ENCODE measurements at regions of chr10 and their contacts with region 1.

Region 1: GRCh38 chr10:69329721-69330178 is 51.5 kb downstream of the HK1 start:
- DNase-seq: no peak

Region 2: DNA sequence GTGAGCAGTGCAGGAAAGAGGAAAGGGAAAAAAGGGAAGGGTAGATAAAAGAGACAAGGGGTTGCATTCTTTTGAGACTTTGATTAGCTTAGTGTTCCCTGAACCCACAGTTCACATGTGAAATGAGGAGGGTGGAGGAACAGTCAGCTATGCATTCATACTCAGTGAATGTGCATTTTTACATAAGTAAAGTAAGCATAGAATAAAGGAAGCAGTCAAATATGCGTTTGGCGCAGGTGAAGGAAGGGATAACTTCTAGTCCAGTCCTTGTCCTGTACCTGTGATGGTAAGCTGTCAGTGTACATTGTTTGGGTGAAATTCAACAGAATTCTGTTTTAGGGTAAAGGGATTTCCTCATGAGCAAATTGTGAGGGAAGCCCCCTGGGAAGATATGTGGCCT is 23.3 kb before region 1 on chr10:
- intact Hi-C with region 1: loop called in 1 of 2 experiments (anchors 1 kb)
- DNase-seq: no peak